Right cardiac atrium (tissue), 5 donors: ENCODE measurements at regions of chr3 and their contacts with region 1.

Region 1: GRCh38 chr3:17820704-17821103 is 78.3 kb upstream of the TBC1D5 start:
- DNase-seq: no peak
- ATAC-seq: no peak
- H3K4me3 ChIP-seq: no peak overlapping the region
- H3K27ac ChIP-seq: no peak overlapping the region
- H3K4me1 ChIP-seq: no peaks in the 10 kb centered on the region
- H3K27me3 ChIP-seq: no peaks in the 10 kb centered on the region

Region 2: DNA sequence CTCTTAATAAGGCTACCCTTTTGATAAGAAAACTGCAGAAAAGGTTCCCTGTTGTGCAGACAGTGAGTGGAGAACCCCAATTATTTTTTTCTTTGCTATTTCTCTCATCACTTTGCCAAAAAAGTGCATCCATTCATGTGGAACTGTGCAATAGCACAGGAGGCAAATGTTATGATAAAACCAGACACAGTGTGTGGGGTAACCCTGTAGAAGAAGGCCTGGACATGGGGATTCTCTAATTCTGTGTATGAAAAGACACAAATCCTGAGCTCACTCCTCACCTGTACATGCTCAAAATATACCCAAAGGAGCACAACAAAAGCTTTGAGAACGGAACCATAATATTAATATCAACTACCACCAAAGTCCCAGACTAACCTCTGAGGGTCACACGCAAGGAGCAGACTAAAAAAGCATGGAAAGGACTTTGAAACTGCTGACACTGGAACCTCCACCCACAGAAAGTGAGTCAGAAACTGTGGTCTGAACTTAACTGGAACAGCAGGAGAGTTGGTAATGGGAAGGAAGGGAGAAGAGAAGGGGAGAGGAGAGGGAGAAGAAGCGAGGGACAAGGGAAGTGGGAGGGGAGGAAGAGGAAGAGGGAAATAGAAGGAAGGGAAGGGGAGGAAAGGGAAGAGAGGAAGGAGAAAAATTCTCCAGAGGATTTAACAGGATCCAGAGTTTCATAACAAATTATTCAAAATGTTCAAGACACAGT is 378.2 kb before region 1 on chr3:
- intact Hi-C with region 1: loop called in 1 of 4 experiments (anchors 10 kb)
- DNase-seq: no peak
- ATAC-seq: no peak
- H3K4me3 ChIP-seq: no peak overlapping the region
- H3K27ac ChIP-seq: no peak overlapping the region
- H3K4me1 ChIP-seq: peaks cover 1% of the 10 kb centered on the region
- H3K27me3 ChIP-seq: no peaks in the 10 kb centered on the region

Region 3: GRCh38 chr3:17882981-17883380 is 62.3 kb after region 1 on chr3:
- intact Hi-C with region 1: no loop called
- DNase-seq: no peak
- ATAC-seq: no peak
- H3K4me3 ChIP-seq: no peak overlapping the region
- H3K27ac ChIP-seq: no peak overlapping the region
- H3K4me1 ChIP-seq: no peaks in the 10 kb centered on the region
- H3K27me3 ChIP-seq: no peaks in the 10 kb centered on the region

Region 4: GRCh38 chr3:18098960-18099587 is 278.4 kb after region 1 on chr3:
- intact Hi-C with region 1: no loop called
- DNase-seq: no peak
- ATAC-seq: no peak
- H3K4me3 ChIP-seq: no peak overlapping the region
- H3K27ac ChIP-seq: no peak overlapping the region
- H3K4me1 ChIP-seq: no peaks in the 10 kb centered on the region
- H3K27me3 ChIP-seq: no peaks in the 10 kb centered on the region